ENCODE measurements at regions of chr3 and their contacts with region 1.

Region 1: DNA sequence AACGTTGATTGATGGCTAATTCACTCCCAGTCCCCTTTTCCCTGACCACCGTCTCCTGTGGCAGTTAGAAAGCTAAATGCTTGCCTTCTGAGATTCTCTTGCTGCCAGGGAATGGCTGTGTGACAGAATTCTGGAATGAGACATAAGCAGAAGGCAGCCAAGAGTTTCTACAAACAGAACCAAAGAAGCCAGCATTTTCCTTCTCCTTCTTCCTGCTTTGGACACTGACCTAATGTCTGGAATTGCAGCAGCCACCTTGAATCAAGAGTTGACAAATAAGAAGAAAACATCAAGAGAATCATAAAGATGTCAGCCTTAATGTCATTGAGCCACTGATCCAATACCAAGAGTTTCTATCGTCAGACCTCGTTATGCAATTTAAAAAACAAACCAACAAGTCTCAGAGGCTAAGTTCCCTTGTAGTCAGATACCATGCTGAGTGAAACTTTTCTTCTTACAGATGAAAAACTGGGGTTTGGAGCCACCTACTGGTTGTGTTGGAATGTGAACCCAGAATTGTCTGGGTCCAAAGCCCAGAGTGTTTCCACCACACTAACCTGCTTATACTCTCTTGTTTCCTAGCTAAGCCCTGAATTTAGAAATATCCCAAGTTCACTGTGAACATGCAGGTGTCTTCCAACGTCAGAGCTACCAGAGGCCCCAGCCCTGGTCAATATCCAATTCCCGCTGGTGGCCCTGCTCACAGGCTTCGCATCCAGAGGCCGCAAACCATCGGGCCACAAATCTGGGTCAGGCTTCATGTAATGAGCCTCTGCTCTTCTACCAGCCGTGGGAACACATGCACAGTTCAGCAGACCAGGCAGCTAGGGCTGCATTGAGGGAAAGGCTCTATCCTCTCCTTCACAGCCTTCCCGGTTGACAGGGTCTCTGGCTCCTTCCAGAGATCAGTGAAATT is 42.5 kb downstream of the MCF2L2 start:
- DNase-seq: peak; percentile 76
- H3K4me3 ChIP-seq: no peak overlapping the region
- H3K27ac ChIP-seq: no peak overlapping the region
- H3K4me1 ChIP-seq: no peaks in the 10 kb centered on the region
- H3K27me3 ChIP-seq: no peaks in the 10 kb centered on the region
- CTCF ChIP-seq: peak; percentile 65 to 71
- POLR2A ChIP-seq: no peak

Region 2: DNA sequence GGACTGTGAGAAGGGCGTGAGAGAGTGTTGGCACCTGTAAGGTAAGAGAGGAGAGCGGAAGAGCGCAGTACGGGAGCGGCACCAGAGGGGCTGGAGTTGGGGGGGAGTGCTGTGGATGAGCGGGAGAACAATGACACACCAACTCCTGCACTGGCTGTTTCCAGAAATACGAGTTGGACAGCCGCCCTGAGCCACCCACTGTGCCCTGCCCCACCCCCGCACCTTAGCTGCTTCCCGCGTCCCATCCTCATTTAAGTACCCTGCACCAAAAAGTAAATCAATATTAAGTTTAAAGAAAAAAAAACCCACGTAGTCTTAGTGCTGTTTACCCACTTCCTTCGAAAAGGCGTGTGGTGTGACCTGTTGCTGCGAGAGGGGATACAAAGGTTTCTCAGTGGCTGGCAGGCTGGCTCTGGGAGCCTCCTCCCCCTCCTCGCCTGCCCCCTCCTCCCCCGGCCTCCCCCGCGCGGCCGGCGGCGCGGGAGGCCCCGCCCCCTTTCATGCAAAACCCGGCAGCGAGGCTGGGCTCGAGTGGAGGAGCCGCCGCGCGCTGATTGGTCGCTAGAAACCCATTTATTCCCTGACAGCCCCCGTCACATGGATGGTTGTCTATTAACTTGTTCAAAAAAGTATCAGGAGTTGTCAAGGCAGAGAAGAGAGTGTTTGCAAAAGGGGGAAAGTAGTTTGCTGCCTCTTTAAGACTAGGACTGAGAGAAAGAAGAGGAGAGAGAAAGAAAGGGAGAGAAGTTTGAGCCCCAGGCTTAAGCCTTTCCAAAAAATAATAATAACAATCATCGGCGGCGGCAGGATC is 1674.4 kb before region 1 on chr3 and contains the start of gene SOX2:
- CTCF ChIA-PET with region 1: no interaction called
- POLR2A ChIA-PET with region 1: no interaction called
- dilution Hi-C with region 1: no loop called
- intact Hi-C with region 1: no loop called
- DNase-seq: peak; percentile 87
- H3K4me3 ChIP-seq: peak within 1 kb of the TSS; percentile 38 to 80 (median 80)
- H3K27ac ChIP-seq: no peak within 1 kb of the TSS
- H3K4me1 ChIP-seq: no peaks in the 10 kb centered on the region
- H3K27me3 ChIP-seq: peaks cover 13 to 14% of the 10 kb centered on the region in 2 experiments
- CTCF ChIP-seq: no peak
- POLR2A ChIP-seq: no peak
- total RNA-seq, gene SOX2: 0.13 TPM in 1 of 2 replicates, not detected in the other

Region 3: GRCh38 chr3:182909318-182910040 is 476.5 kb before region 1 on chr3:
- CTCF ChIA-PET with region 1: interaction called, 9 read pairs
- POLR2A ChIA-PET with region 1: no interaction called
- dilution Hi-C with region 1: no loop called
- intact Hi-C with region 1: loop called (anchors 1 kb)
- DNase-seq: peak; percentile 39
- H3K4me3 ChIP-seq: no peak overlapping the region
- H3K27ac ChIP-seq: no peak overlapping the region
- H3K4me1 ChIP-seq: no peaks in the 10 kb centered on the region
- H3K27me3 ChIP-seq: no peaks in the 10 kb centered on the region
- CTCF ChIP-seq: peak; percentile 31 to 43
- POLR2A ChIP-seq: no peak

Region 4: DNA sequence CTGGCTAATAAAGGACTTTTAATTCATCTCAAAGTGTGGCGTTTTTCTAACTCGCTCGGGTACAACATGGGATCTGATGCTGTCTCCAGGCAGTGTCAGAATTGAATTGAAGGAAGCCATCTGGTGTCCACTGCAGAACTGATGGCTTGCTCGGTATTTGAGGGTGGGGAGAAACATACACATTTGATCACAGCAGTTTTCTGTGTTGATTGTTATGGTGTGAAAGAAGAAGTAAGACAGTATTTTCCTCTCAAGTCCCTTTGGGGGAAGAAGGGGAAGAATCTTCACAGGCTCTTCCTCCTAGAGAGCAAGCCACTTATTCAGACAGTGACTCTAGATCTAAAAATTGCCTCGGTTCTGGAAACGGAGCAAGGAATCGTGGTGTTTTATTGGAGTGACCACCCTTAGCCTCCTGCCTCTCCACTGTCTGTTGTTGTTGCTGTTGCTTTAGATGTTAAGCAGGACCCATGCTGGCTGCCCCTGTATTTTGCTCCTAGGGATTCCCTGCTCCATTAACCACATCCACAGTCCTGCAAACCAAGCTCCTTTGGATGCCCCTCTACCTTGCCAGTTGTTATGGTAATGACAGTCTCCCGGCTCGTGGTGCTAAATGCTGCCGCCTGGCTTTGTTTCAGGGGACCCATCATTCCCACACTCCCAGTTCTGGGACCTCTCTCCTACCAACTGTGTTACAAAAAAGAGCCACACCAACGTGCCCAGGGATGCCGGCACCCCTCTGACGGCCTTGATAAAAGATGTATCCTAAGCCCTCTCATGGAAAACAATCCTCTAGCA is 271.4 kb before region 1 on chr3:
- CTCF ChIA-PET with region 1: no interaction called
- POLR2A ChIA-PET with region 1: no interaction called
- dilution Hi-C with region 1: no loop called
- intact Hi-C with region 1: no loop called
- DNase-seq: no peak
- H3K4me3 ChIP-seq: no peak overlapping the region
- H3K27ac ChIP-seq: no peak overlapping the region
- H3K4me1 ChIP-seq: no peaks in the 10 kb centered on the region
- H3K27me3 ChIP-seq: peaks cover 19 to 36% of the 10 kb centered on the region in 2 experiments
- CTCF ChIP-seq: no peak
- POLR2A ChIP-seq: no peak

Region 5: GRCh38 chr3:183178629-183179549 is 207.1 kb before region 1 on chr3:
- CTCF ChIA-PET with region 1: interaction called, 816 read pairs
- POLR2A ChIA-PET with region 1: no interaction called
- dilution Hi-C with region 1: no loop called
- intact Hi-C with region 1: loop called (anchors 1 kb)
- DNase-seq: peak; percentile 37
- H3K4me3 ChIP-seq: peak overlapping the region; percentile 38 to 78 (median 40)
- H3K27ac ChIP-seq: peak overlapping the region; percentile 7
- H3K4me1 ChIP-seq: peaks cover 5% of the 10 kb centered on the region
- H3K27me3 ChIP-seq: peaks cover 0 to 8% of the 10 kb centered on the region in 2 experiments
- CTCF ChIP-seq: peak; percentile 32 to 42
- POLR2A ChIP-seq: no peak

Region 6: DNA sequence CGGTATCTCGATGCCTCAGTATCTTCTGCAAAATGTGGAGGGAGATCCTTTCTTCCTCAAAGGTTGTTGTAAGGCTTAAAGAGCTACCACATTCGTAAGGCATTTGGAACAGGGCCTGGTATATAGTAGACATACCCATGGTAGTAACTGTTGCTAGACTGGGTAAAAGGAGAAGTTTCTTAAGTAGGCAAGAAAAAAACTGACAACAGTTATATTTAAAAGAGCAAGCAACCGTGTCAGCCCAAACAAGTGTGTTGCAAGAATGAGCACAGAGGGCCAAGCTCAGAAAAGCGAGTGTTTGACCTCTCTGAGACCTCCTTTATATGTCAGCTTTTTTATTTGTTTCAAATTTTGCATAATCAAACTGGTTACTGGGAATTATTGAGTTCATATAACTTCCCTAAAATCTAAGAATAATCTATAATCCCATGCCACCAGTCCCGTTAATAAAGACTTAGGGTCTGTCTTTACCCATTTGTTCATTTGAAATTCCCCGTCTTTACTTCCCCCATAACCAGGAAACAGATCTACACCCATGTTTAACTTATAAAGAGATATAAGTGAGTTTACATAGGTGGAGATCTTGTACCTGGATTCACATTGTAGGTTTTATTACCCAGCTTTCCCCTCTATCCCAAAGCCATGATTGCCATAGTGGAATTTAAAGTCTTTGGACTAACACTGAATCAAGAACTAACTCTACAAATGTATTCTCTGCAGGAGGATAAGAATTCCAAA is 125.6 kb before region 1 on chr3:
- CTCF ChIA-PET with region 1: interaction called, 41 read pairs
- POLR2A ChIA-PET with region 1: no interaction called
- dilution Hi-C with region 1: no loop called
- intact Hi-C with region 1: no loop called
- DNase-seq: no peak
- H3K4me3 ChIP-seq: no peak overlapping the region
- H3K27ac ChIP-seq: no peak overlapping the region
- H3K4me1 ChIP-seq: peaks cover 11% of the 10 kb centered on the region
- H3K27me3 ChIP-seq: no peaks in the 10 kb centered on the region
- CTCF ChIP-seq: no peak
- POLR2A ChIP-seq: no peak

Region 7: GRCh38 chr3:183285828-183286457 is 100.0 kb before region 1 on chr3:
- CTCF ChIA-PET with region 1: interaction called, 22 read pairs
- POLR2A ChIA-PET with region 1: interaction called, 3 read pairs
- dilution Hi-C with region 1: no loop called
- intact Hi-C with region 1: loop called (anchors 1 kb)
- DNase-seq: peak; percentile 97
- H3K4me3 ChIP-seq: peak overlapping the region in 1 of 3 experiments; percentile 10
- H3K27ac ChIP-seq: peak overlapping the region; percentile 91
- H3K4me1 ChIP-seq: peaks cover 30% of the 10 kb centered on the region
- H3K27me3 ChIP-seq: no peaks in the 10 kb centered on the region
- CTCF ChIP-seq: no peak
- POLR2A ChIP-seq: no peak

Region 8: DNA sequence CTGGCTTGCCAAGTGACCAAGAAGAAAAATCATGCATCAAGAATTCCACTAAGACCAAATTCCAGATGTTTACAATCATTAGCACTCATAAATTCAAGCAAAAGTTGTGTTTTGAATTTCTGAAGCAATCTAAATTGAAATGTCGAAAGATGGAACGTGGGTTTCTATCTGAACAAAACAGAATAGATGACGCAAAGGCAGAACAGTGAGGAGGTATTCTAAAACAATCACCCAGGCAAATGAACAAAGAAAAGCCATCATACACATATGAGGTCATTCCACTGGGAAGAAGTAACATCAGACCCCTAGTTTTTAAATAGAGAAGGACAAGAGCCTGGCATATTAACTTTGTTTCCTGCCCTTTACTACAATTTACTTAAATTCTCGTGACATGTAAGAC is 15.6 kb before region 1 on chr3:
- CTCF ChIA-PET with region 1: interaction called, 12 read pairs
- POLR2A ChIA-PET with region 1: no interaction called
- dilution Hi-C with region 1: no loop called
- intact Hi-C with region 1: no loop called
- DNase-seq: no peak
- H3K4me3 ChIP-seq: no peak overlapping the region
- H3K27ac ChIP-seq: peak overlapping the region; percentile 98
- H3K4me1 ChIP-seq: peaks cover 17% of the 10 kb centered on the region
- H3K27me3 ChIP-seq: no peaks in the 10 kb centered on the region
- CTCF ChIP-seq: no peak
- POLR2A ChIP-seq: no peak

Region 9: GRCh38 chr3:183884427-183885296 is 498.7 kb after region 1 on chr3 and contains the start of gene PARL:
- CTCF ChIA-PET with region 1: no interaction called
- POLR2A ChIA-PET with region 1: no interaction called
- dilution Hi-C with region 1: no loop called
- intact Hi-C with region 1: loop called (anchors 1 kb)
- DNase-seq: peak; percentile 93
- H3K4me3 ChIP-seq: peak within 1 kb of the TSS; percentile 47 to 93 (median 85)
- H3K27ac ChIP-seq: peak within 1 kb of the TSS; percentile 34
- H3K4me1 ChIP-seq: peaks cover 11% of the 10 kb centered on the region
- H3K27me3 ChIP-seq: no peaks in the 10 kb centered on the region
- CTCF ChIP-seq: peak; percentile 99 to 100
- POLR2A ChIP-seq: peak; percentile 87
- total RNA-seq, gene PARL: 48.1 and 54.1 TPM in 2 replicates